MCF 10A (cell line): ENCODE measurements at regions of chr5 and their contacts with region 1.

Region 1: DNA sequence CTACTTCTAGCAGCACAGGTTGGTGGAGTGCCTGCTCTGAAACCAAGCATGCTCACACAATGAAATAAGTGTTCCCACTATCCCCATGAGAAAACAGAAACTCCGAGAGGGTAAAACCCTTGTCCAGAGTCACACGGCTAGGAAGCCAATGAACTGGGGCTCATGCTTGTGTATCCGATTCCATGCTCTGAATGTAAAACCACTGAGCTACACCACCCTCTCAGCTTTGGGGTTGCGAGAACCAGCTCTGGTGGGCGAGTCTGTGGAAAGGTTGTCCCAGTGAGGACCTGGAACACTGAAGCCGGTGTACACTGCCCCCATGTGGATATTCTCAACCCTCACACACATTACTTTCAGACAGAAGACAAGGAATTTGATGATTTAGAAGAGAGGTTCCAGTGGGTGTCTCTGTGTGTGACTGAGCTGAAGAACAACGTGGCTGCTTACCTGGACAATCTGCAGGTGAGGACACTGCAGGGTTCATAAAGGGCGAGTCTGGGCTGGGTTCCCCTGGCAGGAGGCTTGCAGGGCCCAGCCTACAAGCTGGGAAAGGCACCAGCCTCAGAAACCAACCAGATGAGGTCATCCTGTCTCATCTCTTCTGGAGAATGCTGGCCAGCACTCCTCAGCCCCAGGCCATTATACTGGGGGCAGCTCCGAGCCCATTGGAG is 37.4 kb downstream of the ARHGEF37 start:
- DNase-seq: peak; percentile 86
- H3K4me3 Mint-ChIP-seq: no peak overlapping the region
- H3K27ac Mint-ChIP-seq: peak overlapping the region; percentile 28
- H3K4me1 Mint-ChIP-seq: peaks cover 16% of the 10 kb centered on the region
- H3K27me3 Mint-ChIP-seq: no peaks in the 10 kb centered on the region
- CTCF ChIP-seq: peak; percentile 92

Region 2: DNA sequence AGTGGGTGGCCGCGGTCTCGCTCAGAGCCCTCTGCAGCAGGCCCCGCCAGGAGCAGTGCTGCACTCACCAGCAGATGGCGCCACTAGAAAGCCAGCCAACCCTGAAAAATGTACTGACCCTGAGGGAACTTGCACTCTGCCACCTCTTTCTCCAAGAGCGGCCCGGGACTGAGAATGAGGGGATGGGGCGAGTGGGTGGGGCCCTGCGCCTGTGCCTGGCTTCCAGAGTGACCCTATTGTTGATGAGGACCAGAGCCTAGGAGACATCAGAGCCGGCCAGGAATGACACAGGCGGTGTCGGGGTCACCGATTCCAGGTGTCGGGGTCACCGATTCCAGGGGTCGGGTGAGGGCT is 236.8 kb before region 1 on chr5:
- CTCF ChIA-PET with region 1: interaction called, 38 read pairs
- POLR2A ChIA-PET with region 1: no interaction called
- intact Hi-C with region 1: loop called (anchors 1 kb)
- DNase-seq: peak; percentile 78
- H3K4me3 Mint-ChIP-seq: no peak overlapping the region
- H3K27ac Mint-ChIP-seq: no peak overlapping the region
- H3K4me1 Mint-ChIP-seq: no peaks in the 10 kb centered on the region
- H3K27me3 Mint-ChIP-seq: no peaks in the 10 kb centered on the region
- CTCF ChIP-seq: peak; percentile 97

Region 3: GRCh38 chr5:149485655-149486425 is 132.9 kb before region 1 on chr5:
- CTCF ChIA-PET with region 1: interaction called, 6 read pairs
- POLR2A ChIA-PET with region 1: interaction called, 4 read pairs
- intact Hi-C with region 1: loop called (anchors 5 kb)
- DNase-seq: peak; percentile 97
- H3K4me3 Mint-ChIP-seq: no peak overlapping the region
- H3K27ac Mint-ChIP-seq: peak overlapping the region; percentile 98
- H3K4me1 Mint-ChIP-seq: peaks cover 57% of the 10 kb centered on the region
- H3K27me3 Mint-ChIP-seq: no peaks in the 10 kb centered on the region
- CTCF ChIP-seq: no peak

Region 4: GRCh38 chr5:149517461-149518122 is 101.1 kb before region 1 on chr5:
- CTCF ChIA-PET with region 1: interaction called, 11 read pairs
- POLR2A ChIA-PET with region 1: interaction called, 8 read pairs
- intact Hi-C with region 1: no loop called
- DNase-seq: peak; percentile 43
- H3K4me3 Mint-ChIP-seq: peak overlapping the region; percentile 36
- H3K27ac Mint-ChIP-seq: peak overlapping the region; percentile 52
- H3K4me1 Mint-ChIP-seq: peaks cover 63% of the 10 kb centered on the region
- H3K27me3 Mint-ChIP-seq: no peaks in the 10 kb centered on the region
- CTCF ChIP-seq: no peak

Region 5: DNA sequence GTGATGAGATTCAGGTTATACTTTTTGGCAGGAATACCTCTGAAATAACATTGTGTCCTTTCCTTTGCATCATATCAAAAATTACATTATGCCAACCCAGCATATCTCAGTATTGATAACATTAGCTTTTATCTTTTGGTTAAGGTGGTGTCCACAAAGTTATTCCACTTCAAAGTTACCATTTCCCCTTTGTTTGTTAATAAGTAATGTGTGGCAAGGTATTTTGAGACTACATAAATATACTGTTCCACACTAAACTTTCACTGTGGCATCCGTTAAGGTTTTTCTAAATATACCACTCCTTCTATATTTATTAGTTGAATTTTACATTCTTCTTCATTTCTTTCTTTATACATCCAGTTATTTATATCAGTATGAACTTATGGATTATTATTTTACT is 51.5 kb before region 1 on chr5:
- CTCF ChIA-PET with region 1: interaction called, 43 read pairs
- POLR2A ChIA-PET with region 1: interaction called, 47 read pairs
- intact Hi-C with region 1: loop called (anchors 1 kb)
- DNase-seq: no peak
- H3K4me3 Mint-ChIP-seq: no peak overlapping the region
- H3K27ac Mint-ChIP-seq: no peak overlapping the region
- H3K4me1 Mint-ChIP-seq: peaks cover 20% of the 10 kb centered on the region
- H3K27me3 Mint-ChIP-seq: no peaks in the 10 kb centered on the region
- CTCF ChIP-seq: no peak

Region 6: DNA sequence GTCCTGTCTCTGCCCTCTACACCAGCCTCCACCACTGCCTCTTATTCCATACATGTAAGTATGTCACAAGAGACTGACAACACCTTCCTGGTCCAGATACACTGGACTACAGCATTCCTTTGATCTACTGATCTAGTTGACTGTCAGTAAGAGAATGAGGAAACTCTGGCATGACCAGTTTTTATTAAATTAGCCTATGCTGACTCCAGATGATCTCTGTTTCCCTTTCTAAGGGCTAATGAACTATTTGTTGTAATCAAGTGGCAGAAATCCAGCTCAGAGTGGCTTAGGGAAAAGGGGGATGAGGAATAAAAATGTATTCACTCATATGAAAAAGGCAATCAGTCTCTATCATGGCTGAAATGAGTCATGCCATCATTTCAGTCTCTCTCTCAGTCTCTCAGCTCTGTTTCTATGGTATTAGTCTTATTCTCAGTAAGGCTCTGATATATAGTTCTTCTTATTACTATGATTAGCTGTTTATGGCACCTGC is 31.9 kb before region 1 on chr5:
- CTCF ChIA-PET with region 1: interaction called, 58 read pairs
- POLR2A ChIA-PET with region 1: interaction called, 85 read pairs
- intact Hi-C with region 1: no loop called
- DNase-seq: no peak
- H3K4me3 Mint-ChIP-seq: no peak overlapping the region
- H3K27ac Mint-ChIP-seq: no peak overlapping the region
- H3K4me1 Mint-ChIP-seq: peaks cover 24% of the 10 kb centered on the region
- H3K27me3 Mint-ChIP-seq: no peaks in the 10 kb centered on the region
- CTCF ChIP-seq: no peak

Region 7: DNA sequence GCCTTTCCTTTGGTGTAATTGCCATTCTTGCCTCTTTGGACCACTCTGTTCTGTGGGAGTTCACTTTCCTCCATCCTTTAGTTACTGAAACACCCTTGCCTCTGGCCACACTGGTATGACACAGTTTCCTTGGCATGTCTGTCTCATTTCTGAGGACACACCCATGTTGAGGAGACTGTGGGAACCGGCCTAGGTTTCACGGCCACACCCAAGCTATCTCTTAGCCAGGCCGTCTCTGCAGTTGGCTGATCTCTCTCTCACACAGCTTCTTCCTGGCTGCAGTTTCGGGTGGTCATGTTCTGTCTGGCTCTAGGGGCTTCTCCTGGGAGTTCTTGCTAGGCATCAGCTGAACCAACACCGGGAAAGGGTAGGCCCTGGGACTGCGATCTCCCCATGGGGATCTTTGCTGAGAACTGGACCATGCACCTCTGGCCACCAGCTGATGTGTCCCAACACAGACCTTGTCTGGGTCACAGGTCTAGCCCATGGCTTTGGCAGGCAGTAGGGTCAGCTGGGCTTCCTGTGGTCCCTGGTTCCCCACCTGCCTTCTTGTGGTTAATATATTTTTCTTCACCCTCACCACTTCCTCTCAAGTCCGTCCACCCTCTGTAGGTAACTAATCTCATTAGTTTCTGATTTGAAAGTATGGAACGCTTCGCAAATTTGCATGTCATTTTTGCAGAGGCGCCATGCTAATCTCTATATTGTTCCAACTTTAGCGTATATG is 12.6 kb before region 1 on chr5:
- CTCF ChIA-PET with region 1: interaction called, 72 read pairs
- POLR2A ChIA-PET with region 1: interaction called, 121 read pairs
- intact Hi-C with region 1: no loop called
- DNase-seq: peak; percentile 99
- H3K4me3 Mint-ChIP-seq: no peak overlapping the region
- H3K27ac Mint-ChIP-seq: peak overlapping the region; percentile 91
- H3K4me1 Mint-ChIP-seq: peaks cover 48% of the 10 kb centered on the region
- H3K27me3 Mint-ChIP-seq: no peaks in the 10 kb centered on the region
- CTCF ChIP-seq: no peak

Region 8: GRCh38 chr5:150582241-150583109 is 963.8 kb after region 1 on chr5:
- CTCF ChIA-PET with region 1: no interaction called
- POLR2A ChIA-PET with region 1: no interaction called
- intact Hi-C with region 1: no loop called
- DNase-seq: no peak
- H3K4me3 Mint-ChIP-seq: no peak overlapping the region
- H3K27ac Mint-ChIP-seq: no peak overlapping the region
- H3K4me1 Mint-ChIP-seq: no peaks in the 10 kb centered on the region
- H3K27me3 Mint-ChIP-seq: no peaks in the 10 kb centered on the region
- CTCF ChIP-seq: no peak